Heart left ventricle (tissue), 16 donors: ENCODE measurements at regions of chr16 and their contacts with region 1.

Region 1: DNA sequence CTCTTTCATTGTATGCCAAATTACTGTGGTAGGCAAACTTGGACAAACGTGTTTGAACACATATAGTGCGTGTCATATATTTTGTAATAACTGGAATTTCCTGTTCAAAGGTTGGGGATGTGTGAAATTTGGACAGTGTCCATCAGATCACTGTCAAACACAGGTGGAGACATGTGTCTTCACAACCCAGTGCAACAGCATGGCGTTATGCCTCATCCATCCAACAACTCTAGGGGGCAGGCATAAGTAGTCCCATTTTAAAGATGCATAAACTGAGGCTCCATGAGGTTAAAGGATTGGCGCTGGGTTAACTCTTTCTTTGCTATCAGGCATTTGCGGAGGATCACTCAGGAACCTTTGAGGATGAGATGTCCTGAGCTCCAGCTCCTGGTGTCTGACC is 103.7 kb downstream of the RBFOX1 start:
- DNase-seq: no peak
- ATAC-seq: no peak
- H3K4me3 ChIP-seq: no peak overlapping the region
- H3K27ac ChIP-seq: no peak overlapping the region
- H3K4me1 ChIP-seq: no peaks in the 10 kb centered on the region
- H3K27me3 ChIP-seq: no peaks in the 10 kb centered on the region
- CTCF ChIP-seq: no peak
- POLR2A ChIP-seq: no peak

Region 2: GRCh38 chr16:7083096-7083495 is 353.2 kb before region 1 on chr16:
- intact Hi-C with region 1: no loop called
- DNase-seq: no peak
- ATAC-seq: no peak
- H3K4me3 ChIP-seq: no peak overlapping the region
- H3K27ac ChIP-seq: no peak overlapping the region
- H3K4me1 ChIP-seq: no peaks in the 10 kb centered on the region
- H3K27me3 ChIP-seq: peaks cover 0 to 36% (median 0%) of the 10 kb centered on the region in 9 donors
- CTCF ChIP-seq: no peak
- POLR2A ChIP-seq: no peak

Region 3: GRCh38 chr16:7218936-7219335 is 217.4 kb before region 1 on chr16:
- intact Hi-C with region 1: no loop called
- DNase-seq: no peak
- ATAC-seq: no peak
- H3K4me3 ChIP-seq: no peak overlapping the region
- H3K27ac ChIP-seq: no peak overlapping the region
- H3K4me1 ChIP-seq: no peaks in the 10 kb centered on the region
- H3K27me3 ChIP-seq: no peaks in the 10 kb centered on the region
- CTCF ChIP-seq: no peak
- POLR2A ChIP-seq: no peak

Region 4: GRCh38 chr16:7482032-7482431 is 45.7 kb after region 1 on chr16:
- intact Hi-C with region 1: no loop called
- DNase-seq: peak in 1 of 5 donors; percentile 40
- ATAC-seq: peak in 2 of 4 donors; percentile 10 to 24
- H3K4me3 ChIP-seq: no peak overlapping the region
- H3K27ac ChIP-seq: no peak overlapping the region
- H3K4me1 ChIP-seq: peaks cover 0 to 4% (median 0%) of the 10 kb centered on the region in 12 donors
- H3K27me3 ChIP-seq: no peaks in the 10 kb centered on the region
- CTCF ChIP-seq: no peak
- POLR2A ChIP-seq: no peak

Region 5: DNA sequence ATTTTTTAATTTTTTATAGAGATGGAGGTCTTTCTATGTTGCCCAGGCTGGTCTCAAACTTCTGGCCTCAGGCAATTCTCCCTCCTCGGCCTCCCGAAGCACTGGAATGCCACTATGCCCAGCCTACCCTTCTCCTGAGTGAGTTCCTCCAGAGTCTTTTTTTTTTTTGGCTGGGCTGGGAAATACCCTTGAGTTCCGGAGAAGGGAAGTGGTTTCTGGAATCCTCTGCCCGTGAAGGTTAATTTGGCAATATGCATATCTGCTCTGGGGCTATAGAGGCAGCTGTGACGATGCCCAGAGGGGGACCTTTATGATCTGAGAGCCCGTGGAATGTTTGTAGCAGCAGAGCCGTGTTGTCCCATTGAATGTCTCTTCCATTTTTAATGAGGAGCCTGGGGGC is 113.8 kb after region 1 on chr16:
- intact Hi-C with region 1: loop called in 1 of 10 experiments (anchors 10 kb)
- DNase-seq: no peak
- ATAC-seq: no peak
- H3K4me3 ChIP-seq: no peak overlapping the region
- H3K27ac ChIP-seq: no peak overlapping the region
- H3K4me1 ChIP-seq: no peaks in the 10 kb centered on the region
- H3K27me3 ChIP-seq: no peaks in the 10 kb centered on the region
- CTCF ChIP-seq: no peak
- POLR2A ChIP-seq: no peak